ENCODE measurements at regions of chr7 and their contacts with region 1.

Region 1: DNA sequence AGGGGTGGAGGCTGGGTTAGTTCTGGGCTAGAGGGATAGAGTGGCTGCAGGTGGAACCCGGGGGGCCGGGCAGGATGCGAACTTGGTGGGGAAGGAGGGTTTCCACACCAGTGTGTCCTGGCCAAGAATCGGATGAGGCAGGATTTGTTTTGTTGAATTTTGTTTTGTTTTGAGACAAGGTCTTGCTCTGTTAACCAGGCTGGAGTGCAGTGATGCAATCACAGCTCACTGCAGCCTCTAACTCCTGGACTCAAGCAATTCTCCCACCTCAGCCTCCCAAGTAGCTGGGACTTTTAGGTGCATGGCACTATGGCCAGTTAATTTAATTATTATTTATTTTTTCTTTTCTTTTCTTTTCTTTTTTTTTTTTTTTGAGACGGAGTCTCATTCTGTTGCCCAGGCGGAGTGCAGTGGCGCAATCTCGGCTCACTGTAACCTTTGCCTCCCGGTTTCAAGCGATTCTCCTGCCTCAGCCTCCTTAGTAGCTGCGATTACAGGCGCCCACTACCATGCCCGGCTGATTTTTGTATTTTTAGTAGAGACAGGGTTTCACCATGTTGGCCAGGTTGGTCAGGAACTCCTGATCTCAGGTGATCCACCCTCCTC is 13.0 kb upstream of the PPP1R35 start:
- DNase-seq: no peak
- H3K4me3 Mint-ChIP-seq: no peak overlapping the region
- H3K27ac Mint-ChIP-seq: no peak overlapping the region
- H3K4me1 Mint-ChIP-seq: peaks cover 29% of the 10 kb centered on the region
- H3K27me3 Mint-ChIP-seq: no peaks in the 10 kb centered on the region

Region 2: GRCh38 chr7:100428199-100428966 is 20.9 kb before region 1 on chr7 and contains the start of gene ZCWPW1:
- CTCF ChIA-PET with region 1: interaction called, 14 read pairs
- POLR2A ChIA-PET with region 1: interaction called, 6 read pairs
- DNase-seq: peak; percentile 97
- H3K4me3 Mint-ChIP-seq: peak within 1 kb of the TSS; percentile 97
- H3K27ac Mint-ChIP-seq: peak within 1 kb of the TSS; percentile 100
- H3K4me1 Mint-ChIP-seq: peaks cover 45% of the 10 kb centered on the region
- H3K27me3 Mint-ChIP-seq: peaks cover 3% of the 10 kb centered on the region
- total RNA-seq, gene ZCWPW1: 2.4 to 2.7 TPM

Region 3: GRCh38 chr7:100840470-100841100 is 391.3 kb after region 1 on chr7:
- CTCF ChIA-PET with region 1: no interaction called
- POLR2A ChIA-PET with region 1: no interaction called
- DNase-seq: no peak
- H3K4me3 Mint-ChIP-seq: no peak overlapping the region
- H3K27ac Mint-ChIP-seq: no peak overlapping the region
- H3K4me1 Mint-ChIP-seq: peaks cover 24% of the 10 kb centered on the region
- H3K27me3 Mint-ChIP-seq: peaks cover 2% of the 10 kb centered on the region

Measured in activated CD4-positive, alpha-beta T cell treated with anti-CD3 and anti-CD28 coated beads, Interleukin-2, amount 10 ng/mL, durations not matched to agents 7 days and 5 days (primary cell).